HEK293 (cell line): ENCODE measurements at regions of chr3 and their contacts with region 1.

Region 1: DNA sequence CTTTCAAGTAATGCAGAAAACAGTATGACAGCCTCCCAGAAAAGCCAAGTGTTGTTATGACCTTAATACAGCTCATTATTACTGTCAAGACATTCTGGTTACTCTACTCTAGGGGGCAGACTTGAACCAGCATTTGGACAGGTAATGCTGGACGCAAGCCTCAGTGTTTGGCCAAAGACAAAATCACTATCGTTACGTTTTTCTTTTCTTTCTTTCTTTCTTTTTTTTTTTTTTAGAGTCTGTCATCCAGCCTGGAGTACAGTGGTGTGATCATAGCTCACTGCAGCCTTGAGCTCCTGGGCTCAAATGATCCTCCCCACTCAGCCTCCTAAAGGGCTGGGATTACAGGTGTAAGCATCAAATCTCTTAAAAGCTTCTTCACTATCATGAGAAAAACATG is 29.4 kb upstream of the TMEM45A start:
- H3K4me3 ChIP-seq: no peak overlapping the region
- H3K27ac ChIP-seq: no peak overlapping the region
- H3K4me1 ChIP-seq: no peaks in the 10 kb centered on the region
- CTCF ChIP-seq: 0 out of 2 replicates have a peak, but pooled peaks have one; percentile 41

Region 2: DNA sequence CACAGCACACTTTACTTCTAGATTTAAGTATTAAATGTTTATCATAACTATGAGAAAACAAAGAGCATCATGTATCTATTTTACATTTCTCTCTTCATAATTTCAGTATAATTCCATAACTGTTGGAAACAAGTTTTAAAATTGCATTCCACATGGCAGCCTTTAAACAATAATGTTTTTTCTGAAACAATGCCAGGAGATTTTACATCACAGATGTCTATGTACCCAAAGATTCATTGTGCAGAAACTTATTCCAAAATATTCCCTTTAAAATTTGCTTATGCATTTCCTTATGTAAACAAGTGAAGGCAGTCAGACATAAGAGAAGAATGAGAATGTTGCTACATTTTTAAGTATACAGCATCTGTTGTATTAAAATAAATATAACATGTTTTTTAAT is 1149.5 kb before region 1 on chr3:
- CTCF ChIA-PET with region 1: no interaction called
- POLR2A ChIA-PET with region 1: no interaction called
- H3K4me3 ChIP-seq: no peak overlapping the region
- H3K27ac ChIP-seq: no peak overlapping the region
- H3K4me1 ChIP-seq: no peaks in the 10 kb centered on the region
- CTCF ChIP-seq: no peak

Region 3: DNA sequence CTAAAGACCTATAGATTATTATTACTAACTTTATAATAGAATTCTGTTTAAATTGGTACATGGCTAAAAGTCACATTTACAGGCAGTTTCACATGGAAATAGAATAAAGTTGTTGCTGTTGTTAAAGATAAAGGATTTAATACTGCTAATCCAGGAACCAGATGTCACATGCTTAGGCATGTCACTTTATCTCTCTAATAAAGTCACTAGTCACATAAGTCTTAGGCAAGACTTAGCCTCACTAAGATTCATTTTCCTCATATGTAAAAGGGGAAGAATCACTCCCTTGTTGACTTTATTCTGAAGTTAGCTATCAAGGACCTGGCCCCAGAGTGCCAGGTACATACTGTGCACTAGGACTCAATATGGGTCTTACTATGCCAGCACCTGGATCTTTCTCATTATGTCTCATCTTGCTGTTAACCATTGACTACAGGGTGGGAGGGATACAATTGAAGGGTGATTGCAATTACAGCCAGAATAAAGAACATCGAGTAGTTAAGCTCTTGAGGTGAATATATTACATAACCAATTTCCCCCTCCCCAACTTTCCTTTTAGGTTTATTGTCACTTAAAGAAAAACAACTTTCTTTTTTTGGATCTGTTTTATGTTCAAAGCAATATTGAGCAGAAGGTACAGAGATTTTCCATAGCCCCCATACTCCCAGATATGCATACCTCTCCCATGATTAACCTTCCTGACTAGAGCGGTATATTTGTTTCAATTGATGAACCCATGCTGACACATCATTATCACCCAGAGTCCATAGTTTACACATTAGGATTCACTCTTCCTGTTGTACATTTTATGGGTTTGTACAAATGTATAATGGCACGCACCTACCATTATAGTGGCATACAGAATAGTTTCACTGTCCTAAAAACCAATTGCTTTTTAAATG is 25.0 kb before region 1 on chr3:
- CTCF ChIA-PET with region 1: interaction called, 11 read pairs
- POLR2A ChIA-PET with region 1: no interaction called
- H3K4me3 ChIP-seq: no peak overlapping the region
- H3K27ac ChIP-seq: no peak overlapping the region
- H3K4me1 ChIP-seq: no peaks in the 10 kb centered on the region
- CTCF ChIP-seq: no peak

Region 4: GRCh38 chr3:100449214-100449613 is 13.8 kb before region 1 on chr3:
- CTCF ChIA-PET with region 1: interaction called, 13 read pairs
- POLR2A ChIA-PET with region 1: interaction called, 4 read pairs
- H3K4me3 ChIP-seq: no peak overlapping the region
- H3K27ac ChIP-seq: no peak overlapping the region
- H3K4me1 ChIP-seq: no peaks in the 10 kb centered on the region
- CTCF ChIP-seq: no peak

Region 5: GRCh38 chr3:100581650-100582049 is 118.6 kb after region 1 on chr3:
- CTCF ChIA-PET with region 1: interaction called, 12 read pairs
- POLR2A ChIA-PET with region 1: no interaction called
- H3K4me3 ChIP-seq: no peak overlapping the region
- H3K27ac ChIP-seq: no peak overlapping the region
- H3K4me1 ChIP-seq: no peaks in the 10 kb centered on the region
- CTCF ChIP-seq: no peak

Region 6: DNA sequence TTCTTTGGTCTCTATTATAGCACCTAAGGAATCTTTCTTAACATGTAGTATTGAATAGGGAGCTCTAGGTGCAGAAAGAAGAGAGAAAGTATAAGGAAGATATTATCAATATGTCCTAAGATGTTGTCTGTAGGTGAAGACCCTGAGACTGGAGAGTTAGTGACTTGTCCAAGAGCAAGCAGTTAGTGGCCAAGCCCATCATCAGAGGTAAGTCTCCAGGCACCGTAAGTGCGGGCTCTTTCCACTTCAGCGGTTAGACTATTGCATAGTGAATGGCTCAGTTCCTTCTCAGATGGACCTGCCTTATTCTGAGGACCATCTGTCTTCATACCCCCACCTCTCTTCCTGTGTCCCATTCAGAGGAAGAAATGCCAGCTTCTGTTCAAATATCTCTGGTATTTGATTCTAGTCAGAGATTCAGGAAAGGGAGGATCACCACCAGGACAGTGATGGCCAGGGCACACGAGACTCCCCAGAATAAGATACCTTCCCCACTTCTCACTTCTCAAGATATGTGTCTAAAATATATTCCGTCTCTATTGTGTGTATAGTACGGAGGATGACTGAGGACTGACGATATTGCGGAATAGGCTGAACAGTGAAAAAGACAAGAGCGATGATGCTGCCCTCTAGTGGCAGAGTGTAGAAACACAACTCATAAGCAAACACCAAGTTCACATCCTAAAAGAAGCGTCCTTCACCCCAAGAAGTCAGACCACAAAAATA is 127.3 kb after region 1 on chr3:
- CTCF ChIA-PET with region 1: interaction called, 107 read pairs
- POLR2A ChIA-PET with region 1: no interaction called
- H3K4me3 ChIP-seq: peak overlapping the region; percentile 21
- H3K27ac ChIP-seq: no peak overlapping the region
- H3K4me1 ChIP-seq: no peaks in the 10 kb centered on the region
- CTCF ChIP-seq: peak; percentile 44; the same call in 1 of the 2 replicates

Region 7: DNA sequence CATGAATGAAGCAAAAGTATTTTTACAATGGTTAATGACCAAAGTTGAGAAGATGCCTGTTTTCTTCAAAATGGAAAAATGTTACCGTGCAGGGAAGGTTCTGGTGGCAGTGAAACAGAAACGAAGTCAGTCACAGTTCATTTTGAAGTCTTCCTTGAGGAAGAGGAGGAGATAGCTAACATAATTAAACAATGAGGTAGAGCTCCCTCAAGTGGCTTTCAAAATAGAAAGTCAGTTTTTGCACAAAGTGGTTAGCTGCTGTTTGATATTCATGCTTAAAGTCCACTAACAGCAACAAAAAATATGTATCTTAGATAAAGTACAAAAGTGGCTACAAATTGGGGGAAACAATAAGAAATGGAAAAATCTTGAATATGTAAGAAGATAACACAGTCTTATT is 333.6 kb after region 1 on chr3:
- CTCF ChIA-PET with region 1: interaction called, 14 read pairs
- POLR2A ChIA-PET with region 1: no interaction called
- H3K4me3 ChIP-seq: no peak overlapping the region
- H3K27ac ChIP-seq: no peak overlapping the region
- H3K4me1 ChIP-seq: no peaks in the 10 kb centered on the region
- CTCF ChIP-seq: no peak